Astrocyte of the cerebellum (primary cell): ENCODE measurements at regions of chr22 and their contacts with region 1.

Region 1: GRCh38 chr22:50012716-50013181 is at the start of gene IL17REL:
- DNase-seq: no peak
- H3K4me3 ChIP-seq: no peak within 1 kb of the TSS
- CTCF ChIP-seq: no peak

Region 2: GRCh38 chr22:49936018-49936952 is 76.5 kb before region 1 on chr22:
- in situ Hi-C with region 1: loop called (anchors 10 kb)
- DNase-seq: peak; percentile 13
- H3K4me3 ChIP-seq: peak overlapping the region; percentile 30
- CTCF ChIP-seq: no peak